Endothelial cell of umbilical vein (primary cell): ENCODE measurements at regions of chr6 and their contacts with region 1.

Region 1: GRCh38 chr6:33454009-33454946 is at the start of gene ZBTB9:
- DNase-seq: peak; percentile 98
- H3K4me3 ChIP-seq: peak within 1 kb of the TSS; percentile 54 to 71 (median 69)
- H3K27ac ChIP-seq: peak within 1 kb of the TSS; percentile 7
- H3K4me1 ChIP-seq: peaks cover 3% of the 10 kb centered on the region
- H3K27me3 ChIP-seq: no peaks in the 10 kb centered on the region
- CTCF ChIP-seq: no peak
- POLR2A ChIP-seq: peak; percentile 94
- total RNA-seq, gene ZBTB9: 8.0 and 8.7 TPM in 2 replicates

Region 2: GRCh38 chr6:33410050-33410710 is 44.1 kb before region 1 on chr6:
- CTCF ChIA-PET with region 1: no interaction called
- POLR2A ChIA-PET with region 1: no interaction called
- dilution Hi-C with region 1: no loop called
- intact Hi-C with region 1: loop called (anchors 1 kb)
- DNase-seq: peak; percentile 99
- H3K4me3 ChIP-seq: peak overlapping the region; percentile 41 to 85 (median 71)
- H3K27ac ChIP-seq: peak overlapping the region; percentile 73
- H3K4me1 ChIP-seq: peaks cover 10% of the 10 kb centered on the region
- H3K27me3 ChIP-seq: no peaks in the 10 kb centered on the region
- CTCF ChIP-seq: no peak
- POLR2A ChIP-seq: peak; percentile 60

Region 3: GRCh38 chr6:33430991-33431879 is 23.0 kb before region 1 on chr6:
- CTCF ChIA-PET with region 1: interaction called, 5 read pairs
- POLR2A ChIA-PET with region 1: interaction called, 6 read pairs
- dilution Hi-C with region 1: no loop called
- intact Hi-C with region 1: loop called (anchors 1 kb)
- DNase-seq: peak; percentile 53
- H3K4me3 ChIP-seq: no peak overlapping the region
- H3K27ac ChIP-seq: no peak overlapping the region
- H3K4me1 ChIP-seq: peaks cover 25% of the 10 kb centered on the region
- H3K27me3 ChIP-seq: no peaks in the 10 kb centered on the region
- CTCF ChIP-seq: no peak
- POLR2A ChIP-seq: no peak

Region 4: GRCh38 chr6:33579828-33580714 is 125.8 kb after region 1 on chr6 and contains the start of gene BAK1:
- CTCF ChIA-PET with region 1: no interaction called
- POLR2A ChIA-PET with region 1: interaction called, 3 read pairs
- dilution Hi-C with region 1: no loop called
- intact Hi-C with region 1: loop called (anchors 5 kb)
- DNase-seq: peak; percentile 91
- H3K4me3 ChIP-seq: peak within 1 kb of the TSS; percentile 78 to 93 (median 83)
- H3K27ac ChIP-seq: peak within 1 kb of the TSS; percentile 70
- H3K4me1 ChIP-seq: peaks cover 17% of the 10 kb centered on the region
- H3K27me3 ChIP-seq: no peaks in the 10 kb centered on the region
- CTCF ChIP-seq: peak; percentile 28 to 63
- POLR2A ChIP-seq: peak; percentile 84
- total RNA-seq, gene BAK1: 25.4 and 27.5 TPM in 2 replicates